ENCODE measurements at regions of chr9 and their contacts with region 1.

Region 1: DNA sequence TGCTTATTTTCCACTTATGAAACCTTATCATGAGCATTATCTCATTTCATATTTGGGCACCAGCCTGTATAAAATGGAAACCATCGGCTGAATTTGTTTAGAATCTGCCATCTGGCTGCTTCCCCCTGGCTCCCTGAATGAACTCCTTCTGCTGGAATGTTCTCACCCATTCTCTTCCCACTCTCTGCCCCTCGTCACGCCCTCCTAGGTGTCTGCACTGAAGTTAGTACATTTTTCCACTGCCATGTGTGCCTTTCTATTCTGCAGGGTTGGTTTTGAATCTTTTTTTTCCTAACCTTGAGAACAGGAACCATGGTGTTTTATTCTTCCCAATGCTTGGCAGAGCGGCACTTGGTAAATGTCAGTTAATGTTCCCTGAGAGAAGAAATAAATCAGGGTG is 359.7 kb downstream of the MLLT3 start:
- DNase-seq: no peak
- ATAC-seq: no peak
- H3K4me3 ChIP-seq: no peak overlapping the region
- H3K27ac ChIP-seq: no peak overlapping the region
- H3K4me1 ChIP-seq: no peaks in the 10 kb centered on the region
- H3K27me3 ChIP-seq: no peaks in the 10 kb centered on the region
- CTCF ChIP-seq: no peak

Region 2: DNA sequence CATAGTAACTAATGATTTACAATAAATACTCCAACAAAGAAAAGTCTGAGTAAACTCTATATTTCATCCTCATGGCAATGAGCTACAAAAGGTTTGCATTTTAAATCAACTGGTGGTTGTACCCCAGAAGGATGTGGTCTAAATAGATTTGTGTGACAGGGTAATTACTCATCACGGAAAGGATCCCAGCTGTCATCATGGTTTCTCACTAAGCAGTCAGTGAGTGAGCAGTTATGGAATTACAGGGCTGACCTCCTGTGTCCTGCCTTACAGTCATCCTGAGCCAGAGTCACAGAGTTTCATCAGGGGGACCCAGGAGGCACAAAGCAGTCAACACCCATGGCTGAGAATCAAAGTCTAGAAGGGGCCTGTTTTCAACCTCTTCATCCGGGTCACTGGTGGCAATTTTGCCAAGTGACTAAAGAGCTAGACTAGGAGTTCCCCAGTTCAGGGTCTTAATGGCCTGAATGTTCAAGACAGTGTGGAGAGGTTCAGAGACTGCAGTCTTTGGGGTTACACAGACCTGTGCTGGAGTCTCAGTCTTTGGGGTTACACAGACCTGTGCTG is 263.0 kb before region 1 on chr9:
- intact Hi-C with region 1: loop called in 1 of 10 experiments (anchors 10 kb)
- DNase-seq: no peak
- ATAC-seq: no peak
- H3K4me3 ChIP-seq: no peak overlapping the region
- H3K27ac ChIP-seq: peak overlapping the region in 1 of 10 donors; percentile 45
- H3K4me1 ChIP-seq: peaks cover 0 to 23% (median 0%) of the 10 kb centered on the region in 9 donors
- H3K27me3 ChIP-seq: no peaks in the 10 kb centered on the region
- CTCF ChIP-seq: no peak

Region 3: GRCh38 chr9:20139763-20140290 is 122.8 kb before region 1 on chr9:
- intact Hi-C with region 1: no loop called
- DNase-seq: no peak
- ATAC-seq: no peak
- H3K4me3 ChIP-seq: no peak overlapping the region
- H3K27ac ChIP-seq: no peak overlapping the region
- H3K4me1 ChIP-seq: no peaks in the 10 kb centered on the region
- H3K27me3 ChIP-seq: no peaks in the 10 kb centered on the region
- CTCF ChIP-seq: no peak

Measured in heart right ventricle (tissue), 16 donors.